IMR-90 (cell line): ENCODE measurements at regions of chr4 and their contacts with region 1.

Region 1: DNA sequence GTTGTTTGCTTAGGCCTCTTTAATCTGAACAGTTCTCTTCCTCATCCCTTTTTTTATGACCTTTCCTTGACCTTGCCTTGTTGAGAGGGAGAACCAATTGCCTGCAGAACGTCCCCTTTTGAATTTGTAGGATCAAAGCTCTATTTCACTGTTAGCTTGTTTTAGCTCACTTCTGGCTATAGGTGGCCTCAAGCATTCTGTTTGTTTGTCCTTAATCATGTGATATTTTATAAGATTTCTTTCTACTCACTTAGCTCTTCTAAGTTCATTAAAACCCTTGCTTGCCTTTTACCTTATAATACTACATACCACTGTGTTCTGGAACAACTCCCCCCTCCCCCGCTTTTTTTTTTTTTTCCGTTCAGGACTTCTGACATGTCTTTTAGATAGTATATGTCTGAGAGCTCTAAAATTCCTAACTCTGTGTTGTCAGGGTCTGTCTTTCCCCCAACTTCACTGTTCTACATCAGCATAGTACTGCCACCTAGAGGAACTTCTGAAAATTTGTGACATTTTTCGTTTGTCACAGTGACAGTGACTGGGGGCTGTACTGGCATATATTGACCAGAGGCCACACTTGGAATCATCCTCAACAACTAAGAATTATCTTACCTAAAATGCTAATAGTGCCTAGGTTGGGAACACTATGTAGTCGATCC is 128.5 kb downstream of the LARP7 start:
- DNase-seq: peak; percentile 18
- ATAC-seq: peak; percentile 42; the same call in 1 of the 2 replicates
- H3K4me3 ChIP-seq: no peak overlapping the region
- H3K27ac ChIP-seq: no peak overlapping the region
- H3K4me1 ChIP-seq: no peaks in the 10 kb centered on the region
- H3K27me3 ChIP-seq: no peaks in the 10 kb centered on the region
- CTCF ChIP-seq: peak; percentile 41
- POLR2A ChIP-seq: no peak
- RAD21 ChIP-seq: peak; percentile 46

Region 2: GRCh38 chr4:112099701-112100297 is 665.6 kb before region 1 on chr4:
- CTCF ChIA-PET with region 1: no interaction called
- POLR2A ChIA-PET with region 1: no interaction called
- dilution Hi-C with region 1: no loop called
- in situ Hi-C with region 1: no loop called
- intact Hi-C with region 1: loop called (anchors 10 kb)
- DNase-seq: peak; percentile 73
- ATAC-seq: peak; percentile 95
- H3K4me3 ChIP-seq: no peak overlapping the region
- H3K27ac ChIP-seq: no peak overlapping the region
- H3K4me1 ChIP-seq: no peaks in the 10 kb centered on the region
- H3K27me3 ChIP-seq: peaks cover 3% of the 10 kb centered on the region; the same call in 1 of the 2 replicates
- CTCF ChIP-seq: peak; percentile 87
- POLR2A ChIP-seq: no peak
- RAD21 ChIP-seq: peak; percentile 86

Region 3: DNA sequence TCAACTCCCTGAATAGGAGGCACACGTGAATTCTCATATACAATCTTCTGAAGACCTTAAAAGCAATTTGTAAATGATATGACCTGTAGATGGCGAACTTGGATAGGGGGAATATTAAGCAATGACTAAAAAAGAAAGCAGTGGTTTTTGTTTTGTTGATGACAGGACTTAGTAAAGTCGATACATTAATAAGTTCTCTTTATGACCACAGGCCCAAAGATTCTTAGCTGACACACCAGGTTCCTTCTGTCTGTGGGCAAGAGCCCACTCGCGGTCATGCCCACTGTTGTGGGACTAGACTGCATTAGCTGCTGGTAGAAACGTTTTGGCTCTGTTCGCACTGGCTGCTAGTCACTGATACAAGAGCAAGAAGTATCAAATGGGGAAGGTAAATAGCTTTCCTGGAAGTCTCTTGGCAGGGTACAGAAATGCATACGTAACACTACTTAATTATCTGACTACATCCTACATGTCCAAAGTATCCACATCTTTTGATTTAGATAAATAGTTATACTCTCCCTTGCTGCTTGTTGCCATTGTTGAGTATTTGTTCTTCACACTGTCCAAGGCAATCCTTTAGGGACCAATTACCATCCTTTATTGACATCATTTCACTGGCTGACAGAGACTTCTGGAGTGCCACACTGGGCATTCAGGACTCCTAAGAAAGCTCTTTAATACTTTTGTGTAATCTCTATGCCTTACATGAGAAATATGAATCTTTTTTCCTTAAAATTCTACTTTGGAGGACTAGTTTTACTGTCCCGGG is 437.3 kb before region 1 on chr4:
- CTCF ChIA-PET with region 1: no interaction called
- POLR2A ChIA-PET with region 1: no interaction called
- dilution Hi-C with region 1: no loop called
- in situ Hi-C with region 1: loop called (anchors 10 kb)
- intact Hi-C with region 1: loop called (anchors 1 kb)
- DNase-seq: peak; percentile 72
- ATAC-seq: peak; percentile 83
- H3K4me3 ChIP-seq: no peak overlapping the region
- H3K27ac ChIP-seq: no peak overlapping the region
- H3K4me1 ChIP-seq: no peaks in the 10 kb centered on the region
- H3K27me3 ChIP-seq: no peaks in the 10 kb centered on the region
- CTCF ChIP-seq: peak; percentile 74
- POLR2A ChIP-seq: no peak
- RAD21 ChIP-seq: peak; percentile 83

Region 4: DNA sequence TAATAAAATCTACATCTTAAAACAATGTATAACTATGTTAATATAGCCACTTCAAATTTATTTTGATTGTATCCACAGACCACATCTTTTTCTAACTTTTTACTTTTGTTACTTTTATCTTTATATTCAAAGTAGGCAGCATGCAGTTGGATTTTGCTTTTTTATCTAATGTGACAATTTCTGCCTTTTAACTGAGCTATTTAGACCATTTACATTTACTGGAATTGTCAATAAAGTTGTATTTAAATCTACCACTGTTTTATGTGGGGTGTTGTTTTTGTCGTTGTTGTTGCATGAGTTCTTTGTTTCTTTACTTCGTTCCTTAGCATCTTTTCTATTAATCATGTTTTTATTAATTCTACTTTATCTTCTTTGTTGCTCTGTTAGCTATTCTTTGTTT is 291.5 kb before region 1 on chr4:
- CTCF ChIA-PET with region 1: no interaction called
- POLR2A ChIA-PET with region 1: no interaction called
- dilution Hi-C with region 1: no loop called
- in situ Hi-C with region 1: no loop called
- intact Hi-C with region 1: no loop called
- DNase-seq: no peak
- ATAC-seq: no peak
- H3K4me3 ChIP-seq: no peak overlapping the region
- H3K27ac ChIP-seq: no peak overlapping the region
- H3K4me1 ChIP-seq: no peaks in the 10 kb centered on the region
- H3K27me3 ChIP-seq: no peaks in the 10 kb centered on the region
- CTCF ChIP-seq: no peak
- POLR2A ChIP-seq: no peak
- RAD21 ChIP-seq: no peak

Region 5: GRCh38 chr4:112636688-112637551 is 128.5 kb before region 1 on chr4 and contains the starts of genes LARP7 and ZGRF1:
- CTCF ChIA-PET with region 1: interaction called, 6 read pairs
- POLR2A ChIA-PET with region 1: no interaction called
- dilution Hi-C with region 1: no loop called
- in situ Hi-C with region 1: loop called (anchors 5 kb)
- intact Hi-C with region 1: loop called (anchors 1 kb)
- DNase-seq: peak; percentile 99
- ATAC-seq: peak; percentile 95
- H3K4me3 ChIP-seq: peak within 1 kb of the TSS; percentile 73
- H3K27ac ChIP-seq: peak within 1 kb of the TSS; percentile 94
- H3K4me1 ChIP-seq: 0 out of 2 replicates have a peak, but pooled peaks cover 2% of the 10 kb centered on the region
- H3K27me3 ChIP-seq: no peaks in the 10 kb centered on the region
- CTCF ChIP-seq: peak; percentile 96
- POLR2A ChIP-seq: peak; percentile 79; the same call in 1 of the 2 replicates
- RAD21 ChIP-seq: 0 out of 2 replicates have a peak, but pooled peaks have one; percentile 20
- total RNA-seq, gene LARP7: 5.9 and 16.7 TPM in 2 replicates
- total RNA-seq, gene ZGRF1: 5.6 and 10.0 TPM in 2 replicates

Region 6: DNA sequence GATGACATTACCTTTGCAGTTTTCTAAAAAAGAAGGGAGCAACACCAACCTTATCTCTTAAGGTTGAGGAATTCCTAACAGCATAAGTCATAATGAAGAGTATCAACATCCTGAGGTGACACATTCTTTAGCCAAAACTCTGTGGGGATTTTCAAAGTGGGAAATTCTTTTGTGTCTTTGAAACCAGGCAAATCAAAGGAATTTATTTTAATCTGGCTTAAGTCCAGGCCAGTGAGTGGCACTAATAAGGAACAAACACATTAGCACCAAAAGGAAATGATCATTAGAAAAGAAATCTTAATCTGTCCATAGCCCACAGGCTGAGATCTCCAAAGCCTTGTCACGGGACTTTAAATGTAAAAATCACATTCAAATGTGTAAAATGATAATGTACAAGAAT is 18.4 kb before region 1 on chr4:
- CTCF ChIA-PET with region 1: interaction called, 10 read pairs
- POLR2A ChIA-PET with region 1: no interaction called
- dilution Hi-C with region 1: no loop called
- in situ Hi-C with region 1: no loop called
- intact Hi-C with region 1: no loop called
- DNase-seq: no peak
- ATAC-seq: no peak
- H3K4me3 ChIP-seq: no peak overlapping the region
- H3K27ac ChIP-seq: no peak overlapping the region
- H3K4me1 ChIP-seq: no peaks in the 10 kb centered on the region
- H3K27me3 ChIP-seq: 0 out of 2 replicates have a peak, but pooled peaks cover under 1% of the 10 kb centered on the region
- CTCF ChIP-seq: no peak
- POLR2A ChIP-seq: no peak
- RAD21 ChIP-seq: no peak

Region 7: DNA sequence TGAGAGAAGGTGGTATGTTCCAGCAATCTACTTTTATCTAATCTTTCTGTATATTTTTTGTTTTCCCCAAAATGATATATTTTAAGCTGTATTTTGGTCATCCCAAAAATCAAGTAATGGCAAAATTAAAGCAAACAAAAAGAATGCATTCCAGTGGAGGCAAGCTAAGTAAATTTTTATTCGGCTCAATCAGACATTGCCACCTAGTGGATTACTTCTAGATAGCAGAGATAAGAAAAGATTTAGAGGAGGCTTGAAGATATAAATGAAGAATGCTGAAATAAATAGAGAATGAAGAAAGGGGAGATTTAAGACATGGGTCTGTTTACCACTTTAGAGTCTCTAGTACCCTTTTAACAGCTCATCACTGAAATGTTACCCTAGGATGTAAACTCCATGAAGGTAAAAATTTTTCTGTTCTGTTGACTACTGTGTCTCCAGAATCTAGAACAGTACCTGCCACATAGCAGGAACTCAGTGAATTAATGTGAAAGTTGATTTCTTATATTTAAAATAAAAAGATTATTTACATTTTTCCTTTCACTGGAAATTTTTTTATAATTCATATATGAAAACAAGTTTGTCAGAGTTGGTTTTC is 173.1 kb after region 1 on chr4:
- CTCF ChIA-PET with region 1: interaction called, 8 read pairs
- POLR2A ChIA-PET with region 1: no interaction called
- dilution Hi-C with region 1: no loop called
- in situ Hi-C with region 1: no loop called
- intact Hi-C with region 1: loop called (anchors 1 kb)
- DNase-seq: peak; percentile 36
- ATAC-seq: peak; percentile 66
- H3K4me3 ChIP-seq: no peak overlapping the region
- H3K27ac ChIP-seq: no peak overlapping the region
- H3K4me1 ChIP-seq: no peaks in the 10 kb centered on the region
- H3K27me3 ChIP-seq: no peaks in the 10 kb centered on the region
- CTCF ChIP-seq: peak; percentile 65
- POLR2A ChIP-seq: no peak
- RAD21 ChIP-seq: peak; percentile 63

Region 8: DNA sequence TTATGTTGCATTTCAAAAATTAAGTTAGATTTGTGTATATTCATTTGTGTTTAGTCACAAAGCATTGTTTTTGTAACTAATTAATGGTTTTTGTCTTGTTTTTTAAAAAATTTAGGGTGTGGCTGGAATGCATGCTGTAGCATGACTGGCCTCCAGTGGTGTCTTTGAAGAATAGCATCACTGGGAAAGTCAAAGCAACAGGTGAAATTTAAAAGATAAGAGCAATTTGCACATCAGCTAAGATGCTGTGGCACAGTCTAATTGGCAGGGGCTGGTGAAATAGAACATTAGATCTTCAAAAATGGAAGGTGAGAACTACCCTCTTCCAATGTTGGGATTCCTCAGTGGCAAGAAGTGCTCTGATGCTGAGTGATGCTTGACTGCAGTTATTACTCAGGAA is 329.4 kb after region 1 on chr4:
- CTCF ChIA-PET with region 1: no interaction called
- POLR2A ChIA-PET with region 1: no interaction called
- dilution Hi-C with region 1: no loop called
- in situ Hi-C with region 1: no loop called
- intact Hi-C with region 1: loop called (anchors 5 kb)
- DNase-seq: no peak
- ATAC-seq: peak; percentile 56; the same call in 1 of the 2 replicates
- H3K4me3 ChIP-seq: no peak overlapping the region
- H3K27ac ChIP-seq: no peak overlapping the region
- H3K4me1 ChIP-seq: no peaks in the 10 kb centered on the region
- H3K27me3 ChIP-seq: no peaks in the 10 kb centered on the region
- CTCF ChIP-seq: peak; percentile 39
- POLR2A ChIP-seq: no peak
- RAD21 ChIP-seq: peak; percentile 41; the same call in 1 of the 2 replicates